Natural killer cell (primary cell): ENCODE measurements at regions of chr12 and their contacts with region 1.

Region 1: DNA sequence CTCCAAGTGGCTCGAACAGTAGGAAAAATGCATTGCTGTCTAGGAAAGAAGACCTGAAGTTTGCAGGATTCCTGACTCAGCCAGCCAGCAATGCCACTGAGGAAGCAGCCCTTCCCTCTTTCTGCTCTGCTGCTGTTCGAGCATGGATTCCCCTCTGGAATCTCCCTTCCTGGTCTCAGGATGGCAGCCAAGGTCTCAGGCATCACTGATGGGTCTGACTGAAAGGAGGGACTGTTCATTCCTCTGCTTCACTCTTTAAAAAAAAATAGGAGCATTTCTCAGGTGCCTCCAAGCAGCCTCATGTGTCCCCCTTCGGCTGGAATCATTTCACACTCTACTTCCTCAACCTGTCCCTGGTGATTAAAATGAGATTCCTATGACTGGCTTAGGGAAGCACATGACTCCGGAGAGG is 62.4 kb downstream of the SLC15A4 start:
- DNase-seq: no peak
- ATAC-seq: no peak
- H3K4me3 ChIP-seq: no peak overlapping the region
- H3K4me3 Mint-ChIP-seq: no peak overlapping the region
- H3K27ac ChIP-seq: no peak overlapping the region
- H3K27ac Mint-ChIP-seq: no peak overlapping the region
- H3K4me1 ChIP-seq: peaks cover 17% of the 10 kb centered on the region
- H3K4me1 Mint-ChIP-seq: peaks cover 26 to 41% of the 10 kb centered on the region in 2 donors
- H3K27me3 ChIP-seq: no peaks in the 10 kb centered on the region
- H3K27me3 Mint-ChIP-seq: no peaks in the 10 kb centered on the region
- CTCF ChIP-seq: no peak

Region 2: GRCh38 chr12:128483526-128484255 is 277.7 kb before region 1 on chr12:
- intact Hi-C with region 1: no loop called
- DNase-seq: no peak
- ATAC-seq: no peak
- H3K4me3 ChIP-seq: no peak overlapping the region
- H3K4me3 Mint-ChIP-seq: no peak overlapping the region
- H3K27ac ChIP-seq: no peak overlapping the region
- H3K27ac Mint-ChIP-seq: no peak overlapping the region
- H3K4me1 ChIP-seq: no peaks in the 10 kb centered on the region
- H3K4me1 Mint-ChIP-seq: no peaks in the 10 kb centered on the region
- H3K27me3 ChIP-seq: no peaks in the 10 kb centered on the region
- H3K27me3 Mint-ChIP-seq: peaks cover 2 to 8% of the 10 kb centered on the region in 2 donors
- CTCF ChIP-seq: no peak

Region 3: GRCh38 chr12:128783129-128783574 is 21.8 kb after region 1 on chr12:
- intact Hi-C with region 1: loop called (anchors 2 kb)
- DNase-seq: peak; percentile 59 to 72
- ATAC-seq: peak; percentile 83 to 89 (median 85)
- H3K4me3 ChIP-seq: peak overlapping the region; percentile 1
- H3K4me3 Mint-ChIP-seq: peak overlapping the region; percentile 86
- H3K27ac ChIP-seq: peak overlapping the region; percentile 91
- H3K27ac Mint-ChIP-seq: peak overlapping the region; percentile 96 to 97
- H3K4me1 ChIP-seq: peaks cover 23% of the 10 kb centered on the region
- H3K4me1 Mint-ChIP-seq: peaks cover 28 to 39% of the 10 kb centered on the region in 2 donors
- H3K27me3 ChIP-seq: no peaks in the 10 kb centered on the region
- H3K27me3 Mint-ChIP-seq: no peaks in the 10 kb centered on the region
- CTCF ChIP-seq: no peak

Region 4: DNA sequence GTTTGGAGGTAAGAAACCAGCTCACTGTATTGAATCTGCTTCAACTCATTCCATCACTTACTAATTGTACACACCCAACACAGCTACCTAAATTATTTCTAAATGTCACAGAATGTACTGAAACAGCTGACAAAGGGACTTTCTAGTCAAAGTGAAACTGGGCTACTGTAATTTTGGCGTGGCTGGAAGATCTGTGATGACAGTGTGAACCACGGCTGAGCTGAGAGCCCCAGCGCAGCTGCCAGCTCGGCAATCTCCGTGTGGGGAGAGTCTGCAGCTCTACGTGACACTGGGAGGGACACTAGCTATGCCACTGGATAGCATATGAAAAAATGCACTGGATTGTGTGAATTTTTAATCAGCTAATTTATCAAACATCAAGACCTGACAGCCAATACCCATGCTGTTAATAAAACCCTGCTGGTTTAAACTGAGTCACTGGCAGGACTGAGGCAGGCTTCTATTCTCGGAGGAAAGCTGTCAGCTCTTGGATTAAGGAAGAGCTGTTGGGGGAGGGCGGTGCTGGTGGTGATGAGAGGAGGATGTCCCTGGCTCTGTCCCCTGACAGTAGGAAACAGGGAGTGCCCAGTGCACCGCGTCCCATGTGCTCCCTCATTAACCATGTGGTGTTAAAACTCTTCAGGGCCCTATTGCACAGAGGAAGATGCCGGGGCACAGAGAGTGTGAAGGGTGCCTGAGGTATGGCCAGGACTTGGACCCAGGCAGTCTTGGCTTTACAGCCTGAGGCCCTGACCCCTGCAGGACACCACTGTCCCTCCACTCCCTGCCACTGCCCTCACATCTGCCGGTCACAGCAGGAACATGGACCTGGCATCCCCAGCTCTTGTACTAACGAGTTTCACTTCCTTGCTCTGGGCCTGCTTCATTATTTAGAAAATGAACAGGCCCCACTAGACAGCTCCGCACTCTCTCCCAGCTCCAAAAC is 49.1 kb after region 1 on chr12:
- intact Hi-C with region 1: loop called (anchors 1 kb)
- DNase-seq: peak; percentile 70 to 73
- ATAC-seq: peak; percentile 64 to 84 (median 68)
- H3K4me3 ChIP-seq: peak overlapping the region; percentile 2
- H3K4me3 Mint-ChIP-seq: peak overlapping the region; percentile 94
- H3K27ac ChIP-seq: peak overlapping the region; percentile 97
- H3K27ac Mint-ChIP-seq: peak overlapping the region; percentile 99
- H3K4me1 ChIP-seq: peaks cover 51% of the 10 kb centered on the region
- H3K4me1 Mint-ChIP-seq: peaks cover 63 to 65% of the 10 kb centered on the region in 2 donors
- H3K27me3 ChIP-seq: no peaks in the 10 kb centered on the region
- H3K27me3 Mint-ChIP-seq: no peaks in the 10 kb centered on the region
- CTCF ChIP-seq: no peak

Region 5: DNA sequence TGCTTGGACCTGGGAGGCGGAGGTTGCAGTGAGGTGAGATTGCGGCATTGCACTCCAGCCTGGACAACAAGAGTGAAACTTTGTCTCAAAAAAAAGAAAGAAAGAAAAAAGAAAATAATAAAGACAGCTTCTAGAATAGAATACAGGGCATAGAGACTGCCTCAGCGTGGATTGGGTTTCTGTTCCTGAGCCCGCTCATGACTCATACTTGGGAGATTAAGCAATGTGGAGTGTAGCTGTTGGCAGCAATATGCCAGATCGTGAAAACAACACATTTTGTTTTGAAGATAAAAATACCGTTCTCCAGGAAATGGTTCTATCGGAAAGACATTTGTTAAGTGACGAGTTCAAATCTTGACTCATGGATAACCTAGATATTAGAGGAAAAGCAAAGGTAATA is 159.1 kb after region 1 on chr12:
- intact Hi-C with region 1: no loop called
- DNase-seq: no peak
- ATAC-seq: no peak
- H3K4me3 ChIP-seq: no peak overlapping the region
- H3K4me3 Mint-ChIP-seq: no peak overlapping the region
- H3K27ac ChIP-seq: no peak overlapping the region
- H3K27ac Mint-ChIP-seq: no peak overlapping the region
- H3K4me1 ChIP-seq: peaks cover under 1% of the 10 kb centered on the region
- H3K4me1 Mint-ChIP-seq: no peaks in the 10 kb centered on the region
- H3K27me3 ChIP-seq: no peaks in the 10 kb centered on the region
- H3K27me3 Mint-ChIP-seq: peaks cover 0 to 8% of the 10 kb centered on the region in 2 donors
- CTCF ChIP-seq: no peak

Region 6: GRCh38 chr12:129911428-129912049 is 1150.2 kb after region 1 on chr12:
- intact Hi-C with region 1: loop called (anchors 5 kb)
- DNase-seq: peak; percentile 25 to 37
- ATAC-seq: peak; percentile 48 to 83 (median 61)
- H3K4me3 ChIP-seq: no peak overlapping the region
- H3K4me3 Mint-ChIP-seq: no peak overlapping the region
- H3K27ac ChIP-seq: no peak overlapping the region
- H3K27ac Mint-ChIP-seq: no peak overlapping the region
- H3K4me1 ChIP-seq: no peaks in the 10 kb centered on the region
- H3K4me1 Mint-ChIP-seq: no peaks in the 10 kb centered on the region
- H3K27me3 ChIP-seq: no peaks in the 10 kb centered on the region
- H3K27me3 Mint-ChIP-seq: peaks cover 6 to 15% of the 10 kb centered on the region in 2 donors
- CTCF ChIP-seq: peak; percentile 82